Caco-2 (cell line): ENCODE measurements at regions of chr1 and their contacts with region 1.

Region 1: DNA sequence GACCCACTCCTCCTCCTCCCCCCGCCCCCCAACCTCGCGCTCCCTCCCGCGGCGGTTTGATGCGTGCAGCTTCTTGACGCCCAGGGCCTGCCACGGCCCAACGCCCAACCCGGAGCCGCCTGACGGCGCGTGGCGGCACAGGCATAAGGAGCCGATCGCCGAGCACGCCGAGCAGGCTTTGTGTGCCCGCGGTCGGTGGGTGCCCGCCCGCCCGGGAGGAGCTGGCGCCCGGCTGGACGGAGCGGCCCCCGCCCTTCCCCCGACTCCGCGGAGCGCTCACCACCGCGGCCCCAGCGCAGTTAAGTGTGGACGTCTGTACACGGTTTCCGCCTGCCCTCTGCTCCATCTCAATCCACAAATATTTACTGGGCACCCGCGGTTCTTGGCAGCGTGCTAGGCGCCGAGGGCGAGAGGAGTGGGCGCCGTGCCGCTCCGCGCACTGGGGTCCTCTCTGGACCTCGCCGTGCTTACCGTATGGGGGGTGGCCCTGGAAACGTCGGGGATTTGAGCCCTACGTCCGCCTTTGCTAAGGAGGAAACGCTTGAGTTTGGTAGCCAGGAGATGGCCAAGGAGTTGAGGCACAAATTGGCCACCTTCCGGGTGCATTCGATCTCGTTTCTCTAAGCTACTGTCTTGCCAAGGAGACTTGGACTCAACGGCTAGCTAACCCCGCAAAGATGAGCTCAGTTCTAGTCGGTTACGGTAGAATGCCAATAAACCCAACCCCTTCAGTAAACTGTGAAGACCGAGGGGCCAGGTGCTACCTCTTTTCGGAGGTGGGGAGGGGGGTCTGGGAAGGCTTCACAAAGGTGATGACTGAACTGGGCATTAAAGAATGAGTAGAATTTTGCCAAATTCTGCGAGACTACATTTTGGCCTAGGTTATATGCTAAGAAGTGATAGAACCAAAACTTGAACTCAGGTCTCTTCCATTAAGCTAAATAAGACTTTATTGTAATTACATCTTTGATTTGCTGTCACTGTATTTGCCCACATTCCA is 583 bp upstream of the HDGF start:
- DNase-seq: peak; percentile 96 to 99
- H3K4me3 ChIP-seq: peak overlapping the region; percentile 55
- H3K4me3 Mint-ChIP-seq: peak overlapping the region; percentile 79
- H3K27ac Mint-ChIP-seq: peak overlapping the region; percentile 100
- H3K4me1 ChIP-seq: peaks cover 34% of the 10 kb centered on the region
- H3K4me1 Mint-ChIP-seq: peaks cover 21% of the 10 kb centered on the region
- H3K27me3 ChIP-seq: no peaks in the 10 kb centered on the region
- H3K27me3 Mint-ChIP-seq: no peaks in the 10 kb centered on the region
- CTCF ChIP-seq: peak in 1 of 2 experiments; percentile 23

Region 2: DNA sequence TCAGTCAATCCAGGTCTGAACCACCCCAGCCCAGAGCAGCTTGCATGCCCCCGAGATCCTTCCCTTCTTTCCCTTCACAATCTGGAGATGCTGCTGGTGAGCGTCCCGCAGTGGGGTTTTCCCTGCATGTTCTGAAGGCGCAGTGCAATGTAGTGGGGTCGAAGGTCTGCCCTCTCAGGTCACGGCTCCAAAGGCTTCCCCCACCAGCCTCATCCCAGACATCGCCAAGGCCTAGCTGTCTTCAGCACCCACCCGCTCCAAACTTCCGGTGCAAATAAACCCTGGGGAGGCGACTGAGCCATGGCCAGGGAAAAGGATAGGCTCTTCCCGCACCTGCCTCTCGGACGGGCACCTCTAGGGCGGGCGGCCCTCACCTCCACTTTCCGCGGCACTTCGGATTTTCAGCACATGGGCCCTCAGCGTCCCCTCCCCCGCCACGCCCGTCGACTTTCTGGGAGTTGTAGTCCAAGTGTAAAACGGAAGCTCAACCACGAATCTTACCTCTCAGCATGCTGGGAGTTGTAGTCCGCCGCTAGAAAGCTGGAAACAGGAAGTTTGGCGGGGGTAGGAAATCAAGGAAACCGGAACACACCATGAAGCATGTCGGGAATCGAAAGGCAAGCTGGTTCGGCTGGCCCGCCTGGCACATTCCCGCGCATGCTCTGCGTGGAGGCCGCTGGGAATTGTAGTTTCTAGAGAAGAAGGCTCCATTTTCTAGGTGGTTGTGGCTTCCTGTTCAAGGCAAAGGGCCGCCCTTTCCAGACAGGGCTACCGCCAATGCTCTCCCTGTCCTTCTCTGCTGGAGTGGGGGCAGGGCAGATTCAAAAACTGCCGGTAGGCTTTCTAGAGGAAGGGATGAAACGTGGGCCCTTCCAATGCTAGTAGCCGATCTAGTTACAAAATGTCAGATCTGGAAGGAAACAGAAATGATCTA is 11.1 kb before region 1 on chr1 and contains the start of gene MRPL24:
- CTCF ChIA-PET with region 1: interaction called, 24 read pairs
- POLR2A ChIA-PET with region 1: interaction called, 32 read pairs
- intact Hi-C with region 1: no loop called
- DNase-seq: peak; percentile 97 to 99
- H3K4me3 ChIP-seq: peak within 1 kb of the TSS; percentile 62
- H3K4me3 Mint-ChIP-seq: peak within 1 kb of the TSS; percentile 100
- H3K27ac Mint-ChIP-seq: peak within 1 kb of the TSS; percentile 98
- H3K4me1 ChIP-seq: peaks cover 16% of the 10 kb centered on the region
- H3K4me1 Mint-ChIP-seq: peaks cover 25% of the 10 kb centered on the region
- H3K27me3 ChIP-seq: no peaks in the 10 kb centered on the region
- H3K27me3 Mint-ChIP-seq: no peaks in the 10 kb centered on the region
- CTCF ChIP-seq: no peak
- total RNA-seq, gene MRPL24: 52.6 and 54.2 TPM in 2 replicates

Region 3: DNA sequence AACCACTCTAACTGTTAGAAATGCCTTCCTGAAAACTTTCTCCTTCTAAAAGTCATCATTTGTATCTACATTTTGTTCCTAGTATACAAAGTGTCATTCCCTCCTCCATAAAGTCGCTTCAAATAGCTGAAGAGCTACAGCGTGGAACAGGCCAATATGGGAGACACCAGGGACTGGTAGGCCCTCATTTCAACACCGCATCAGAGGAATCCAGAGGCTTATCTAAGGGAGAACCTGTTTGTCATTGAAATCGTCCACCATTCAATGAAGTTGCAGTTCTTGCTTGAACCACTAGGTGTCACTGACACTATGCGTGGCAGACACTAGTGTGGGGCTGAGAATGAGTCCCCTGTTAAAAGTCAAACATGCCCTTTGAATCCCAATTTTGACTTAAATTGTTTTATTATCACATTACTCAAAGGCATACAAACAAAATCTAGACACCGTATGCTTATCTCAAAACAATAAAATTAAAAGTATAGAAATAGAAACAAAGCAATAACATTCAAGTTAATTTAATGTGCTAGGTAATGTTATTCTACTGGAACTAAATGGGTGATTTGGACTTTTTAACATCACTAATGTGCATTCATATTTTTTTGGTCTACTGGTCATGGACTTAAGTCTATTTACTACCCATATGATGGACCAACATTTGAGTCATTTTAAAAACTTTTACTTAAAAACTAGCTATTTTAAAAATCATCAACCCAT is 617.9 kb after region 1 on chr1:
- CTCF ChIA-PET with region 1: no interaction called
- POLR2A ChIA-PET with region 1: no interaction called
- intact Hi-C with region 1: no loop called
- DNase-seq: peak; percentile 86 to 88
- H3K4me3 ChIP-seq: no peak overlapping the region
- H3K4me3 Mint-ChIP-seq: peak overlapping the region; percentile 37
- H3K27ac Mint-ChIP-seq: peak overlapping the region; percentile 76
- H3K4me1 ChIP-seq: peaks cover 34% of the 10 kb centered on the region
- H3K4me1 Mint-ChIP-seq: peaks cover 53% of the 10 kb centered on the region
- H3K27me3 ChIP-seq: no peaks in the 10 kb centered on the region
- H3K27me3 Mint-ChIP-seq: no peaks in the 10 kb centered on the region
- CTCF ChIP-seq: peak; percentile 79 to 86